GM12878 (cell line): ENCODE measurements at regions of chr21 and their contacts with region 1.

Region 1: GRCh38 chr21:25421327-25422028 is 185.8 kb downstream of the MRPL39 start:
- DNase-seq: peak; percentile 93
- ATAC-seq: peak; percentile 61
- H3K4me3 ChIP-seq: peak overlapping the region; percentile 59
- H3K27ac ChIP-seq: peak overlapping the region; percentile 97
- H3K4me1 ChIP-seq: peaks cover 27% of the 10 kb centered on the region
- H3K27me3 ChIP-seq: no peaks in the 10 kb centered on the region
- CTCF ChIP-seq: peak; percentile 65 to 84 (median 71); a peak in 4 of 6 replicates
- EP300 ChIP-seq: 0 out of 4 replicates have a peak, but pooled peaks have one; percentile 34 to 58
- POLR2A ChIP-seq: 0 out of 2 replicates have a peak, but pooled peaks have one; percentile 50
- RAD21 ChIP-seq: peak; percentile 88

Region 2: DNA sequence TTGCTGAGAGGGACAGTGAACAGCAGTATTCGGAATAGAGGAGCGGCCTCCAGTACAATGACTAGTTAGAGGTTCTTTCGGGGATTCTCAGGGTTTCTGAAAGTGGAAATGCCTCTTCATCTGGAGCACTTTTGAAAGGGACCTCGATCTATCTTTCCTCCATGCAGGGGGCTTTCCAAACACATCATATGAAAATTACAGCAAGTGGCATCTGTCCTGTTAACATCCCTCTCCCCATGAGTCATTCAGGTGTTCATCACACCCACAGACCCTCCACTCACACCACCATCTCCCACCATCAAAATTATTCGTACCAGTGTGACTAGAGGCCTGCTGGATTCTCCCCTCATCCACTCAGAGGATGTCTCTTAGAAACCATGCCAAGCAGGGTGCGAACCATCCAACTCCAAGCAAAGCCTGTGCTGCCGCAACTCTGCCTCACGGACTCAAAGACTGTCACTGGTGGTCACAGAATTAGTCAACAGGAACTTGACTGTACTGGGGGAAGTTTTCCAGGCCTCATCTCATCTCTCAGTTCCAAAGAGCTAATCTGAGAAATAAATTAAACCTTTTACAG is 25.3 kb before region 1 on chr21:
- CTCF ChIA-PET with region 1: interaction called, 5 read pairs
- POLR2A ChIA-PET with region 1: interaction called, 5 read pairs
- RAD21 ChIA-PET with region 1: interaction called, 8 read pairs
- SMC1A ChIA-PET with region 1: interaction called, 20 read pairs
- in situ Hi-C with region 1: no loop called
- intact Hi-C with region 1: loop called (anchors 1 kb)
- DNase-seq: peak; percentile 88
- ATAC-seq: peak; percentile 91
- H3K4me3 ChIP-seq: peak overlapping the region; percentile 54
- H3K27ac ChIP-seq: peak overlapping the region; percentile 92
- H3K4me1 ChIP-seq: peaks cover 20% of the 10 kb centered on the region
- H3K27me3 ChIP-seq: no peaks in the 10 kb centered on the region
- CTCF ChIP-seq: no peak
- EP300 ChIP-seq: peak; percentile 61 to 79
- POLR2A ChIP-seq: no peak
- RAD21 ChIP-seq: no peak

Region 3: GRCh38 chr21:25487046-25487594 is 65.6 kb after region 1 on chr21:
- CTCF ChIA-PET with region 1: interaction called, 8 read pairs
- POLR2A ChIA-PET with region 1: interaction called, 5 read pairs
- RAD21 ChIA-PET with region 1: interaction called, 34 read pairs
- SMC1A ChIA-PET with region 1: interaction called, 84 read pairs
- in situ Hi-C with region 1: no loop called
- intact Hi-C with region 1: loop called (anchors 1 kb)
- DNase-seq: peak; percentile 96
- ATAC-seq: peak; percentile 80
- H3K4me3 ChIP-seq: peak overlapping the region; percentile 11
- H3K27ac ChIP-seq: peak overlapping the region; percentile 85
- H3K4me1 ChIP-seq: peaks cover 46% of the 10 kb centered on the region
- H3K27me3 ChIP-seq: no peaks in the 10 kb centered on the region
- CTCF ChIP-seq: no peak
- EP300 ChIP-seq: peak; percentile 97 to 98
- POLR2A ChIP-seq: no peak
- RAD21 ChIP-seq: peak; percentile 37; the same call in 1 of the 2 replicates

Region 4: GRCh38 chr21:25515484-25516405 is 94.3 kb after region 1 on chr21:
- CTCF ChIA-PET with region 1: interaction called, 6 read pairs
- POLR2A ChIA-PET with region 1: no interaction called
- RAD21 ChIA-PET with region 1: interaction called, 25 read pairs
- SMC1A ChIA-PET with region 1: interaction called, 19 read pairs
- in situ Hi-C with region 1: no loop called
- intact Hi-C with region 1: loop called (anchors 1 kb)
- DNase-seq: no peak
- ATAC-seq: no peak
- H3K4me3 ChIP-seq: no peak overlapping the region
- H3K27ac ChIP-seq: no peak overlapping the region
- H3K4me1 ChIP-seq: peaks cover 8% of the 10 kb centered on the region; the same call in 1 of the 2 replicates
- H3K27me3 ChIP-seq: no peaks in the 10 kb centered on the region
- CTCF ChIP-seq: no peak
- EP300 ChIP-seq: no peak
- POLR2A ChIP-seq: no peak
- RAD21 ChIP-seq: no peak

Region 5: GRCh38 chr21:25550352-25551120 is 129.1 kb after region 1 on chr21:
- CTCF ChIA-PET with region 1: no interaction called
- POLR2A ChIA-PET with region 1: no interaction called
- RAD21 ChIA-PET with region 1: no interaction called
- SMC1A ChIA-PET with region 1: no interaction called
- in situ Hi-C with region 1: no loop called
- intact Hi-C with region 1: no loop called
- DNase-seq: no peak
- ATAC-seq: no peak
- H3K4me3 ChIP-seq: no peak overlapping the region
- H3K27ac ChIP-seq: no peak overlapping the region
- H3K4me1 ChIP-seq: peaks cover 4% of the 10 kb centered on the region
- H3K27me3 ChIP-seq: no peaks in the 10 kb centered on the region
- CTCF ChIP-seq: no peak
- EP300 ChIP-seq: no peak
- POLR2A ChIP-seq: no peak
- RAD21 ChIP-seq: no peak

Region 6: GRCh38 chr21:25573409-25574206 is 152.1 kb after region 1 on chr21:
- CTCF ChIA-PET with region 1: interaction called, 163 read pairs
- POLR2A ChIA-PET with region 1: interaction called, 29 read pairs
- RAD21 ChIA-PET with region 1: interaction called, 253 read pairs
- SMC1A ChIA-PET with region 1: interaction called, 426 read pairs
- in situ Hi-C with region 1: no loop called
- intact Hi-C with region 1: no loop called
- DNase-seq: peak; percentile 81
- ATAC-seq: peak; percentile 38
- H3K4me3 ChIP-seq: peak overlapping the region; percentile 14; the same call in 1 of the 2 replicates
- H3K27ac ChIP-seq: peak overlapping the region; percentile 92
- H3K4me1 ChIP-seq: peaks cover 38% of the 10 kb centered on the region
- H3K27me3 ChIP-seq: no peaks in the 10 kb centered on the region
- CTCF ChIP-seq: no peak
- EP300 ChIP-seq: no peak
- POLR2A ChIP-seq: peak; percentile 80
- RAD21 ChIP-seq: no peak